ENCODE measurements at regions of chr7 and their contacts with region 1.

Region 1: DNA sequence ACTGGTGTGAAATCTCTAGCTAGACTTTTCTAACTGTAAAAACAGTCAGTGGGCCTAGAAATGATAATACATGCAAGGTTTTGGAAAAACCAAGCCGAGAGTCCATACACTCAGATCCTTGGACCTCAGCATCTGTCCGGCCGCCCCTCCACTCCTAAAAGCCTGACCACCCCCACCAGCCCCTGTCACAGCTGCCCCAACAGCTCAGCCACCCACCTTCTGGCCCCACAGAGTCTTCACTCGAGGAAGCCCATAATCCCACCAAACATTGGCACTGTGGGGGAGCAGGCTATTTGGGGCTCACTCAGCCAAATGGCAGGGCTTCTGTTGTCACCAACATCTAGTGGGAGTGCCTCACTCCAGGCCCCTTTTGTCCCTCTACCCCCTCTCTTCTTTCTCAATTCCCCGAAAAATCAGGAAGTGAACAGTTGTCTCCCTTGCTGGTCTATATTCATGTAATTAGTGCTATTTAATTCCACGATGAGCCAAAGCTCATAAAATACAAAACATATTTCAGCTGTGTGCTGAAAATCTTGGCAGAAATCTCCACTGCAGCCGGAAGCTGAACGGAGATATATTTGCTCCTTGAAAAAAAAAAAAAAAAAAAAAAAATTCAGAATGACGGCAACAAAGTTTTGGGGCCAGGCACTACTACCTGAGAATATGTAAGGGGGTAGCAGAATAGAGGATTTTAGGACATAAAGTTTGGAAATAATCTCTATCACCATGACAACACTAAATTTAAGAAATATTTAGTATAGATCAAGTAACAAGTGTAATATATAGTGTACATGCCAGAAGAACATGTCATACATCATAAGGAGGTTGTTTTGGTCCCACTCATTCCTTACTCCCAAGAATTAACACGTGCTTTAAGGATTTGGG is 55.4 kb downstream of the PLXNA4 start:
- DNase-seq: peak; percentile 13
- H3K4me3 ChIP-seq: no peak overlapping the region
- H3K27ac ChIP-seq: no peak overlapping the region
- H3K4me1 ChIP-seq: peaks cover 13% of the 10 kb centered on the region
- H3K27me3 ChIP-seq: no peaks in the 10 kb centered on the region
- CTCF ChIP-seq: no peak

Region 2: DNA sequence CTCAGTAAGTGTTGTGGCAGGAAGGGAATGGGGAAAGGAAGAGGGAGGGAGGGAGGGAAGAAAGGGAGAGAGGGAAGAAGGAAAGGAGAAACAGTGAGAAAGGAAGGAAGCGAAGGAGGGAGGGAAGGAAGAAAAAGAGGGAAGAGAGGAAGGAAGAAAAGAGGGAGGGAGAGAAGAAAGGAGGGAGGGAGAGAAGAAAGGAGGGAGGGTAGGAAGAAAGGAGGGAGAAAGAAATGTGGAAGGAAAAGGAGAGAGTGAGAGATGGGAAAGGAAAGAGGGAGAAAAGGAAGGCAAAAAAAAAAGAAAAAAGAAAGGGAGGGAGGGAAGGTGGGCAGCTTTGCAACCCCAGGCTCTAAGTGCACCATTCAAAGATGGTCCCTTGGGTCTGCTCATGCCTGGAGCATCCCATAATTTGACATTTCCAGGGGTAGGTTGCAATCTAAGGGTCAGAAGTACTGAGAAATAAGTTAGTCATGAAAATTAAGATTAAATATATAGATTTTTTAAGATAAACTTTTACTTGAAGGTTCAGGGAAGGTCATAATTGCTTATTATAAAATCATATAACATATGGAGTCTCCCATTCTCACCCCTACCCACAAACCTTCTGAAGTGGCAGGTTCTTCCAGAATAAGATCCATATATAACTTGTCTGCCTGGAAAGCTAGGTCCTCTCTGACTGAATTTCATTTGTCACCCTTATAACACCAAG is 193.8 kb before region 1 on chr7:
- CTCF ChIA-PET with region 1: interaction called, 11 read pairs
- POLR2A ChIA-PET with region 1: no interaction called
- intact Hi-C with region 1: no loop called
- DNase-seq: no peak
- H3K4me3 ChIP-seq: no peak overlapping the region
- H3K27ac ChIP-seq: no peak overlapping the region
- H3K4me1 ChIP-seq: no peaks in the 10 kb centered on the region
- H3K27me3 ChIP-seq: peaks cover 55% of the 10 kb centered on the region
- CTCF ChIP-seq: no peak

Measured in A673 (cell line).